Activated CD4-positive, alpha-beta memory T cell treated with anti-CD3 and anti-CD28 coated beads, Interleukin-2, amount 10 ng/mL, durations not matched to agents 7 days and 5 days (primary cell): ENCODE measurements at regions of chr17 and their contacts with region 1.

Region 1: GRCh38 chr17:19977311-19978208 is at the start of gene AKAP10:
- DNase-seq: peak; percentile 95
- H3K4me3 Mint-ChIP-seq: peak within 1 kb of the TSS; percentile 96
- H3K27ac Mint-ChIP-seq: peak within 1 kb of the TSS; percentile 97
- H3K4me1 Mint-ChIP-seq: peaks cover 53% of the 10 kb centered on the region
- H3K27me3 Mint-ChIP-seq: no peaks in the 10 kb centered on the region
- total RNA-seq, gene AKAP10: 43.0 to 43.9 TPM

Region 2: GRCh38 chr17:19867064-19867313 is 110.6 kb before region 1 on chr17:
- CTCF ChIA-PET with region 1: no interaction called
- POLR2A ChIA-PET with region 1: interaction called, 25 read pairs
- DNase-seq: peak; percentile 65
- H3K4me3 Mint-ChIP-seq: peak overlapping the region; percentile 81
- H3K27ac Mint-ChIP-seq: peak overlapping the region; percentile 65
- H3K4me1 Mint-ChIP-seq: peaks cover 17% of the 10 kb centered on the region
- H3K27me3 Mint-ChIP-seq: no peaks in the 10 kb centered on the region

Region 3: GRCh38 chr17:19937522-19937921 is 40.0 kb before region 1 on chr17:
- CTCF ChIA-PET with region 1: no interaction called
- POLR2A ChIA-PET with region 1: no interaction called
- DNase-seq: no peak
- H3K4me3 Mint-ChIP-seq: no peak overlapping the region
- H3K27ac Mint-ChIP-seq: no peak overlapping the region
- H3K4me1 Mint-ChIP-seq: peaks cover 3% of the 10 kb centered on the region
- H3K27me3 Mint-ChIP-seq: no peaks in the 10 kb centered on the region

Region 4: DNA sequence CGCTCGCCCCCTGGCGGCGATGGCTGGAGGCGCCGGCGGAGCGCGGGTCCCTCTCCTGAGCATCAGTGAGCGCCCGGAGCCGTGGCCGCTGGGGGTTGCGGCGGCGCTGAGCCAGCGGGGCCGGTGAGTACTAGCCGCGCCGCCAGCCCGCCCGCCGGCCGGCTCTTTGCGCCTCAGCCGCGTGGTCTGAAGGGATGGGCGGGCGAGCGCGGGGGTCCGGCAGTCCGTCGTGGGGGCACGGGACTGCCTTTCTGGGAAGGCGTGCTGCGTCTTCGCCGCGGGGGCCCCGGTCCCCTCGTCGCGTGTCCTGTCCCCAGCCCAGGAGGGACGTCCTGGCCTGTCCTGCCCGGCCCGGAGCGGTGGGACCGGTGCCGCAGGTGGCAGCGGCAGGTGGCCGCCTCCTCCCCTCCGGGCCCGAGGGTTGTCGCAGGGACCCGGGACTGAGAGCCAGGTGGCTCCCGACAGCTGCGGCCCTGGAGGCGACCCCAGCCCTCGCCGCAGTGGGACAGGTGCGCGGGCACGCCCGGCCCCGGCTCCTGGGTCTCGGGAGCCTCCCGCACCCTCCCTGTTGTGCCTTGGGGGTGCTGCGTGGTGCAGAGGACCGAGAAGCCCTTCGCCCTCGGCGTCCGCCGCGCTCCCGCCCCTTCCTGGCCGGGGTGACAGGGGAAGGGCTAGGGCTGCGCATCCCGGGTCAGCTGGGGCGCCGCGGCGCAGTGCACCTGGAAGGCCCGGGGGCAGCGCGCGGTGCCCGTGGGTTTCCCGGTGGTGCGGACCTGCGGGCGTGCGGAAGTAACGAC is 31.9 kb after region 1 on chr17 and contains the start of gene SPECC1:
- CTCF ChIA-PET with region 1: interaction called, 3 read pairs
- POLR2A ChIA-PET with region 1: interaction called, 18 read pairs
- DNase-seq: peak; percentile 89
- H3K4me3 Mint-ChIP-seq: peak within 1 kb of the TSS; percentile 86
- H3K27ac Mint-ChIP-seq: no peak within 1 kb of the TSS
- H3K4me1 Mint-ChIP-seq: peaks cover 14% of the 10 kb centered on the region
- H3K27me3 Mint-ChIP-seq: peaks cover 46% of the 10 kb centered on the region
- total RNA-seq, gene SPECC1: 9.6 to 10.3 TPM

Region 5: GRCh38 chr17:20083460-20083859 is 105.9 kb after region 1 on chr17:
- CTCF ChIA-PET with region 1: no interaction called
- POLR2A ChIA-PET with region 1: no interaction called
- DNase-seq: no peak
- H3K4me3 Mint-ChIP-seq: no peak overlapping the region
- H3K27ac Mint-ChIP-seq: no peak overlapping the region
- H3K4me1 Mint-ChIP-seq: no peaks in the 10 kb centered on the region
- H3K27me3 Mint-ChIP-seq: no peaks in the 10 kb centered on the region